Panc1 (cell line): ENCODE measurements at regions of chr17 and their contacts with region 1.

Region 1: GRCh38 chr17:57833179-57833939 is 16.5 kb downstream of the MRPS23 start:
- DNase-seq: no peak
- ATAC-seq: peak; percentile 61
- H3K4me3 ChIP-seq: no peak overlapping the region
- H3K27ac ChIP-seq: no peak overlapping the region
- H3K4me1 ChIP-seq: peaks cover 8% of the 10 kb centered on the region
- H3K27me3 ChIP-seq: no peaks in the 10 kb centered on the region
- CTCF ChIP-seq: peak; percentile 97

Region 2: DNA sequence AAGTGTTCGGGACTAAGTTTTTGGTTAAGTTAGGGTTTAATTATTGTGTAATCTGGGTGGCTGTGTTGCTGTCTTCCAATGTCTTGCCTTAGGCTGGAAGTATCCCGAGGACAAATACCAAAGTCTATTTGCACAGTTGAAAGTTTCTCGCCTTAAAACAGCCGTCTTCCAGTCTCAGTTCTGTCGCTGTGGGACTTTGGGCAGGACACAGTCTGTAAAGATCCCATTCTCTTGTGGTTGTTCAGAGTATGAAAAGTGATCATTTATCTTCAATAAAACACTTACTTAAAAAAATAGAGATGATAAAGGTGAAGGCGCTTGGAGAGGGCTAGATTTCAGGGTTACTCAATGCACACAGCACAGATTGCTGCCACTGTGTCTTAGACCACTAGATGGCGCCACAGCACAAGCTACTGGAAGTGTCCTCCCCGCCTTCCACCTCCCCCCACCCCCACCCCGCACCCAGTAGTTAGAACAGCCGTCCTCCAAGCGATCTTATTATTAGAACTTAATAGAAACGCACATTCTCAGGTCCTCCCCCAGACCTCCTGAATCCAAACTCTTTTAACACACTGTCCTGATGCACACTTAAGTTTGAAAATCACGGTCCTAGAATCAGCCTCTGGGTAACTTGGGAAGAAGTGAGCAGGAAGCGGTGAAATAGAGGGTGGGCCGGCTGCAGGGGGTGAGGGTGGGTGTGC is 702.4 kb before region 1 on chr17:
- CTCF ChIA-PET with region 1: interaction called, 3 read pairs
- POLR2A ChIA-PET with region 1: no interaction called
- in situ Hi-C with region 1: no loop called
- intact Hi-C with region 1: loop called (anchors 2 kb)
- DNase-seq: peak; percentile 56
- ATAC-seq: peak; percentile 96
- H3K4me3 ChIP-seq: peak overlapping the region; percentile 19 to 51; a peak in 3 of 4 replicates
- H3K27ac ChIP-seq: no peak overlapping the region
- H3K4me1 ChIP-seq: peaks cover 6% of the 10 kb centered on the region
- H3K27me3 ChIP-seq: no peaks in the 10 kb centered on the region
- CTCF ChIP-seq: peak; percentile 94

Region 3: GRCh38 chr17:57243171-57243948 is 590.0 kb before region 1 on chr17:
- CTCF ChIA-PET with region 1: interaction called, 3 read pairs
- POLR2A ChIA-PET with region 1: no interaction called
- in situ Hi-C with region 1: no loop called
- intact Hi-C with region 1: loop called (anchors 5 kb)
- DNase-seq: peak; percentile 59
- ATAC-seq: peak; percentile 89
- H3K4me3 ChIP-seq: no peak overlapping the region
- H3K27ac ChIP-seq: no peak overlapping the region
- H3K4me1 ChIP-seq: no peaks in the 10 kb centered on the region
- H3K27me3 ChIP-seq: peaks cover 7% of the 10 kb centered on the region; the same call in 1 of the 2 replicates
- CTCF ChIP-seq: peak; percentile 100

Region 4: DNA sequence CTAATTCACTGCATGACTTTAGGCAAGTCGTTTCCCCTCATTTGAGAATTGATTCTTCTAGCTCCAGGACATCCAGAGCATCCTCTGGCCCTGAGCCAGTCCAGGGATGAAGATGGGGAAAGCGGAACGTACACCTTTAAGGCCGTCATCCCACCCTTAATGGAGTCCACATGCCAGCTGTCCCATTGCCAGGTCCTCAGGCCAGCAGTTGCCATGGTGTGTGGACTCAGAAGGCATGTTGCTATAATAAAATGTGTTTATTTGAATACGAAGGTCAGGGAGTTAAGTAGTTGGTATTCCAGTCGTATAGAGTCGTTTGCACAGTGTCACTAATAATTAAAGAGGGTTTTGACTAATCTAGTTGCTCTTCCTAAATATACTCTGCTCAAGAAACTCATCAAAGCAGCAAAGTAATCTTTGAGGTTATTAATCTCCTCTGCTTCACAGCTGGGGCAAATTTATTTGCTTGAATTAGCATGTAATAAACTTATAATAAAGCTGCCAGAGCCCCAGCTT is 118.6 kb before region 1 on chr17:
- CTCF ChIA-PET with region 1: no interaction called
- POLR2A ChIA-PET with region 1: no interaction called
- in situ Hi-C with region 1: no loop called
- intact Hi-C with region 1: no loop called
- DNase-seq: no peak
- ATAC-seq: no peak
- H3K4me3 ChIP-seq: no peak overlapping the region
- H3K27ac ChIP-seq: no peak overlapping the region
- H3K4me1 ChIP-seq: no peaks in the 10 kb centered on the region
- H3K27me3 ChIP-seq: peaks cover 65% of the 10 kb centered on the region
- CTCF ChIP-seq: no peak

Region 5: DNA sequence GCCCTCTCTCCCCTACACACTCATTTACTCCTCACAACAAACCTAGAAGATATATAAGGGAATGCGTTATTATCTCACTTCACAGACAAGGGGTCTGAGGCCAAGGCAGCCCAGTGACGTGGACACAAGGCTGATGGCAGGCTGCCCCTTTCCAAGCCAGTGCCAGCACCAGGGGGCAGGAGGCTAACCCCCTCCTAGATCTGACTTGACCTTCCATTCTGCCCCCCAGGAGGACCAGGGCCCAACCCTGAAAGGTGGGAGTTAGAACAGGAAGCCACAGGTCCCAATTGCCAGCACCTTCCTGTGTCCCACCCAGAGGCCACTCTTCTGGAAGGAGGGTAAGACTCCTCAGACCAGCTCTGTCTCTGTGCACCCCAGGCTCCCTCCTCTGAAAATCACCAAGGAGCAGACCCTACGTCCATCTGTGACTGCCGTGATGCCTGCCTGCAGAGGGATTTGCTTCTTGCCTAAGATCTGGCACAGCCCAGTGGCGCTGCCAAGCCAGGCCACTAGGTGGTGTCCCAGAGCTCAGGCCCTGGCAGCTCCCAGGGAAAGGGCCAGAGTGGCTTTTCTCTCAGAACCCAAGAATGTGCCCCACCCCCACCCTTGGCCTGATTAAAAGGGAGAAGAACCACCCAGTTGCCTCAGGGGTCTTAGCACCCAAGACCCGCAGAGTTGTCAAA is 58.9 kb after region 1 on chr17:
- CTCF ChIA-PET with region 1: no interaction called
- POLR2A ChIA-PET with region 1: no interaction called
- in situ Hi-C with region 1: no loop called
- intact Hi-C with region 1: loop called (anchors 10 kb)
- DNase-seq: peak; percentile 61
- ATAC-seq: peak; percentile 77
- H3K4me3 ChIP-seq: no peak overlapping the region
- H3K27ac ChIP-seq: peak overlapping the region; percentile 94
- H3K4me1 ChIP-seq: peaks cover 69% of the 10 kb centered on the region
- H3K27me3 ChIP-seq: no peaks in the 10 kb centered on the region
- CTCF ChIP-seq: peak; percentile 99